Activated T-helper 1 cell treated with anti-CD3 and anti-CD28 coated beads, Interleukin-12 subunit alpha, Interleukin-12 subunit beta, Interleukin-2, Interleukin-4 antibody, amounts not matched to agents 30 ng/mL and 10 ng/mL and 1 ng/mL, durations not matched to agents 14 hours and 24 hours and 36 hours (primary cell): ENCODE measurements at regions of chr21 and their contacts with region 1.

Region 1: DNA sequence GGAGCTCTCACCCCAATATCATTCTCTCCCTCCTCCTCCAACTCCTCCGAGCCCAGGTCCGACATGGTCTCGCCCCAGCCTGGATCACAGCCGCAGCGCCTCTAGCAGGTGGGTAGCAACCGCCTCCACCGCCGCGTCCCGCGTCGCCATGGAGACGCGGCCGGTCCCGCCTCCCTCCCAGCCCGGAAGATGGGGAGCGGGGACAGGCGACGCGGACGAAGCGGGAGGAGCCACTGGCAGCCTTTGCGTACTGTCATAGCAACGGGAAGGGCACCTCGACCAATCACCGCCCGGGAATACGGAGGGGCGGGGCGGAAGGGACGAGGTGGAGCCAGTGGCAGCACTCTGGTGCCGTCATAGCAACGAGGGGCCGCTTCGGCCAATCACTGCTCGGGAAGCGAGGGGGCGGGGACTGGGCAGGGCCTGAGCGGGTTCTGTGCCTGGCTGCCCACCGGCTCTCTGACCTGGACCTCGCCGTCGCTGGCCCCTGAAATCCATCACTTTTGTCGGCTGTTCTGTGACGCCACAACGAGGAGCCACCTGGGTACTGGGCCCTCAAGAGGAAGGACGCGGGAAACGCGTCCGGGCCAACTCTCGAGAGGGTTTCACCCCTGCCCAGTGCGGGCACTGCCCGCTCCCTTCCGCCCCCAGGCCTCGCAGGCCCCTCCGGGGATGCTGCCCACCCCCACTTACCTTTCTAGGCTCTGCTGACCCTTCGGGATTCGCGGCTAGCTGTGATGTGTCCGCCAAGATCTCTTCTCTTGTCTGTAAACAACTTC is at the start of gene RSPH1:
- DNase-seq: peak; percentile 99
- H3K4me3 Mint-ChIP-seq: peak within 1 kb of the TSS; percentile 92
- H3K27ac Mint-ChIP-seq: peak within 1 kb of the TSS; percentile 83
- H3K4me1 Mint-ChIP-seq: peaks cover 25% of the 10 kb centered on the region
- H3K27me3 Mint-ChIP-seq: peaks cover 6% of the 10 kb centered on the region
- total RNA-seq, gene RSPH1: not detected in 2 replicates

Region 2: GRCh38 chr21:42002421-42002958 is 493.8 kb before region 1 on chr21:
- intact Hi-C with region 1: loop called (anchors 5 kb)
- DNase-seq: peak; percentile 78
- H3K4me3 Mint-ChIP-seq: peak overlapping the region; percentile 34
- H3K27ac Mint-ChIP-seq: peak overlapping the region; percentile 85
- H3K4me1 Mint-ChIP-seq: peaks cover 58% of the 10 kb centered on the region
- H3K27me3 Mint-ChIP-seq: no peaks in the 10 kb centered on the region

Region 3: GRCh38 chr21:42227909-42228708 is 268.2 kb before region 1 on chr21:
- intact Hi-C with region 1: loop called (anchors 2 kb)
- DNase-seq: peak; percentile 89
- H3K4me3 Mint-ChIP-seq: peak overlapping the region; percentile 34
- H3K27ac Mint-ChIP-seq: peak overlapping the region; percentile 87
- H3K4me1 Mint-ChIP-seq: peaks cover 84% of the 10 kb centered on the region
- H3K27me3 Mint-ChIP-seq: no peaks in the 10 kb centered on the region

Region 4: GRCh38 chr21:42414928-42415769 is 81.2 kb before region 1 on chr21:
- intact Hi-C with region 1: loop called (anchors 2 kb)
- DNase-seq: peak; percentile 88
- H3K4me3 Mint-ChIP-seq: peak overlapping the region; percentile 73
- H3K27ac Mint-ChIP-seq: peak overlapping the region; percentile 98
- H3K4me1 Mint-ChIP-seq: peaks cover 66% of the 10 kb centered on the region
- H3K27me3 Mint-ChIP-seq: no peaks in the 10 kb centered on the region

Region 5: DNA sequence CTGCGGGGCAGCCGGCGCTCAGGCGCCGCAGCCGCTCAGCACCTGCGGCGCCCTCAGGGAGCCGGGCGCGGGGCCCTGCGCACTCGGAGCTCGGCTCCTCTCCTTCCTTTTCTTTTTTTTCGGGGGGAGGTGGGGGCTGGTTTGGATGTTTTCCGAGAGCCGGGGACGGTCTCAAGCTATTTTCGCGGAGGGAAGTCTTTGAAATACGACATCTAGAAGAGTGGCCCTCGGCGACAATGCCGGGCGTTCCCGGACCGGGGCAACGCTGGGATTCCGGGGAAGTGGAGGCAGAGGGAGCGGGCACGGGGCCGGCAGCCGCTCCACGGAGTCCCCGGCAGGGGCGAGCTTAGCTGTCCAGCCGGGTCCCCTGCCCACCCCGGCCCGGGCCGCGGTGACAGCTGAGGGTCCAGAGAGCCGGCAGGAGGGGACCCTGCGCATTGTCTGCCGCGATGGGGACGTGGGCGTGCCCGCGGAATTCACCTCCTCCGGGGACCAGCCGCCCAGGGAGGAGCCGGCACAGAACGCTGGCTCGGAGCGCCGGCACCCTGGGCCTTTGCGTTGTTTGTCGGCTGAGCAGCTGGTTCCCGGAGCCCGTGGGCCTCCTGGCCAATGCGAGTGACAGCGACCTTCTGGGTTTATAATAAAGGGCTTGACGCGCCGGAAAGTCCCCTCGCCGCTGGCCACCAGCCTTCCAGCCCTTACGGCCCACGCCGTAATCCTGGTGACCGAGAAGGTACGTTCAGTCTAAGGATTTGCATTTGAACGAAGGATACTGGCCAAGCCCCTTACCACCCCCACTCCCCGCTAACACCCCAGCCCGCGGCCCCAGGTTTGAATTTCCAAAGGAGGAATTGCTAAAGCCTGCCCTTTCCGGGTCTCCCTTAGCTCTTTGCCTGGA is 17.9 kb after region 1 on chr21:
- intact Hi-C with region 1: loop called (anchors 1 kb)
- DNase-seq: peak; percentile 55
- H3K4me3 Mint-ChIP-seq: peak overlapping the region; percentile 87
- H3K27ac Mint-ChIP-seq: peak overlapping the region; percentile 68
- H3K4me1 Mint-ChIP-seq: peaks cover 17% of the 10 kb centered on the region
- H3K27me3 Mint-ChIP-seq: peaks cover 9% of the 10 kb centered on the region

Region 6: GRCh38 chr21:42892931-42893755 is 396.8 kb after region 1 on chr21 and contains the start of gene NDUFV3:
- intact Hi-C with region 1: loop called (anchors 5 kb)
- DNase-seq: peak; percentile 99
- H3K4me3 Mint-ChIP-seq: peak within 1 kb of the TSS; percentile 89
- H3K27ac Mint-ChIP-seq: peak within 1 kb of the TSS; percentile 91
- H3K4me1 Mint-ChIP-seq: peaks cover 12% of the 10 kb centered on the region
- H3K27me3 Mint-ChIP-seq: no peaks in the 10 kb centered on the region
- total RNA-seq, gene NDUFV3: 41.9 and 44.4 TPM in 2 replicates